PC-9 (cell line): ENCODE measurements at regions of chr7 and their contacts with region 1.

Region 1: GRCh38 chr7:30776971-30777370 is 5.8 kb downstream of the MINDY4 start:
- DNase-seq: no peak
- H3K4me3 ChIP-seq: no peak overlapping the region
- H3K27ac ChIP-seq: no peak overlapping the region
- H3K4me1 ChIP-seq: peaks cover 11% of the 10 kb centered on the region
- H3K27me3 ChIP-seq: no peaks in the 10 kb centered on the region
- CTCF ChIP-seq: no peak

Region 2: DNA sequence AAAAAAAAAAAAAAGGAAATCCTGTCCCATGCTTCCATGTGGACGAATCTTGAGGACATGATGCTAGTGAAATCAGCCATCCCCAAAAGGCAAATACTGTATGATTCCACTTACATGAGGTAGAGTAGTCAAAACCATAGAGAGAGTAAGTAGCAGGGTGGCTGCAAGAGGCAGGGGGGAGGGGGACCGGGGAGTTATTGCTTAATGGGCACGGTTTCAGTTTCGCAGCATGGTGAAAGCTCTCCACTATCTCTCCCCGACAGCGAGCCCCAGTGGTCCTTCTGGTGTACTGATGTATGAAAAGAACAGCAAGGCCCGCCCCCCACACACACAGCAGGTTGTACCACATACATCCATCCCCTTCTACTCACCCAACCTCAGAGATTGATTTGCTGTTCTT is 331.2 kb before region 1 on chr7:
- CTCF ChIA-PET with region 1: interaction called, 11 read pairs
- POLR2A ChIA-PET with region 1: no interaction called
- intact Hi-C with region 1: no loop called
- DNase-seq: no peak
- H3K4me3 ChIP-seq: no peak overlapping the region
- H3K27ac ChIP-seq: no peak overlapping the region
- H3K4me1 ChIP-seq: no peaks in the 10 kb centered on the region
- H3K27me3 ChIP-seq: no peaks in the 10 kb centered on the region
- CTCF ChIP-seq: no peak

Region 3: GRCh38 chr7:30965372-30965771 is 188.4 kb after region 1 on chr7:
- CTCF ChIA-PET with region 1: no interaction called
- POLR2A ChIA-PET with region 1: no interaction called
- intact Hi-C with region 1: no loop called
- DNase-seq: no peak
- H3K4me3 ChIP-seq: no peak overlapping the region
- H3K27ac ChIP-seq: no peak overlapping the region
- H3K4me1 ChIP-seq: no peaks in the 10 kb centered on the region
- H3K27me3 ChIP-seq: peaks cover 68% of the 10 kb centered on the region
- CTCF ChIP-seq: no peak